Mammary epithelial cell (primary cell): ENCODE measurements at regions of chr13 and their contacts with region 1.

Region 1: DNA sequence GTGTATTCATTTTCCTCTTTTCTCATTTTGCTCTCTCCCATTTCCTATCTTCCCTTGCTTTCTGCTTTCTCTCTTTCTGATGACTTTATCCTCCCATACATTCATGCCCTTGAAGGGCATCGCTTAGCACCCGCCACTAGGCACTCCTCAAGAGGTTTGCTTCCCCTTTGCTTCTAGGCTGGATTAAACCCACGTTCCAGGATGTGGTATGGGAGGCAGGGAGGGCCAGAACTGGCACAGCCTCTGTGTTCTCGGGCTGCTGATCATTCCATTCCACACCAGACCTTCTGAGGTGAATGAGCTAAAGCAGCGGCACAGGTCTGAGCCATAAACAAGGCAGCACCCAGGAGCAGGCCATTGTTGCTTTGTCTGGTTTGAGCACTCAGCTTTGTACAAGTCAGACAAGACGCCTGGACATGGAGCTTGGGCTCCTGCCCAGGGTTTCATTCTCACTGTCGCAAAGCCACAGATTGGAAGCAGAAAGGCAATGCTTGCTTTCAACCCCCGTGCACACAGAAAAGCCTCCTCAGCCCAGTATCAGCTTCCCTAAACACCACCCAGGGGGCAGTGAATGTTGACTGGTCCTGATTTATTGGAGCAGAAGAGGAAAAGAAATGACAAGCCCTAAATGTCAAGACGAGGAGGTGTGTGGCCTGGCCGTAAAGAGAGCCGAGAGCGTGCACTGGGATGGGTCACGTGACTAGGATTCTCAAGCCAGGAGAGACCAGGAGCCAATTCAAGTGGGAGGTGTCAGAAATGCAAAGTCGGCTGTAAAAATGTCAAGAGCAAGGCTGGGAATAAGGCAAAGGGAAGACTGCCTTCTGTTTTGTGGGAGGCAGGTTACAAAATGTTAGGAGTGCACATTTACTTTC is 218.0 kb upstream of the SERP2 start:
- DNase-seq: no peak
- H3K4me3 ChIP-seq: no peak overlapping the region
- H3K27ac ChIP-seq: no peak overlapping the region
- H3K4me1 ChIP-seq: peaks cover 28% of the 10 kb centered on the region
- H3K27me3 ChIP-seq: no peaks in the 10 kb centered on the region
- CTCF ChIP-seq: no peak

Region 2: DNA sequence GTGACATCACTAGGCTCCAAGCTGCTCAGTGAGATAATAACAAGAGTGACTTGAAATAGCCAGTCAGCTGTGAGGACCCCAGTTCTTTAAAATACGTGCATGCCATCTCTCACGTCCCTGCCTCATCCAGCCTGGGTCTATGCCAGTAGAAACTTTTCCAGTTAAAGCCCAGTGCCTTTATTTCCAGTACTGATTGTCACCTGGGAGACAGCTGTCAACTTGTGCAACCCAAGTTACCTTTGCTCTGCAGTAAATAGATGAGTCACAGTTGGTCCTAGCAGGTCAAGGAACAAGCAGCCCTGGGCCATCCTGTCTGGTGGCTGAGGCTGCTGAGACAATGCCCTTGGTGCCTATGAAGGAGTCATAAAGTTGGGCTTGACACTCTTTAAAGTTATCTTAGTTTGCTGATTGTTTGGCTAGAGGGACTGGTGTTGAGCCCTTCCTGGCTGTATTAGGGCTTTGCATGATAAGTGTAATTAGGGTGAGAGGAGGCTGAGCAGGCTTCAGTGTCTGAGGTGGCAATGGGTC is 47.3 kb before region 1 on chr13:
- CTCF ChIA-PET with region 1: no interaction called
- dilution Hi-C with region 1: loop called (anchors 5 kb)
- in situ Hi-C with region 1: no loop called
- intact Hi-C with region 1: no loop called
- DNase-seq: peak; percentile 43
- H3K4me3 ChIP-seq: no peak overlapping the region
- H3K27ac ChIP-seq: no peak overlapping the region
- H3K4me1 ChIP-seq: peaks cover 22% of the 10 kb centered on the region
- H3K27me3 ChIP-seq: no peaks in the 10 kb centered on the region
- CTCF ChIP-seq: no peak